B cell (primary cell): ENCODE measurements at regions of chr2 and their contacts with region 1.

Region 1: DNA sequence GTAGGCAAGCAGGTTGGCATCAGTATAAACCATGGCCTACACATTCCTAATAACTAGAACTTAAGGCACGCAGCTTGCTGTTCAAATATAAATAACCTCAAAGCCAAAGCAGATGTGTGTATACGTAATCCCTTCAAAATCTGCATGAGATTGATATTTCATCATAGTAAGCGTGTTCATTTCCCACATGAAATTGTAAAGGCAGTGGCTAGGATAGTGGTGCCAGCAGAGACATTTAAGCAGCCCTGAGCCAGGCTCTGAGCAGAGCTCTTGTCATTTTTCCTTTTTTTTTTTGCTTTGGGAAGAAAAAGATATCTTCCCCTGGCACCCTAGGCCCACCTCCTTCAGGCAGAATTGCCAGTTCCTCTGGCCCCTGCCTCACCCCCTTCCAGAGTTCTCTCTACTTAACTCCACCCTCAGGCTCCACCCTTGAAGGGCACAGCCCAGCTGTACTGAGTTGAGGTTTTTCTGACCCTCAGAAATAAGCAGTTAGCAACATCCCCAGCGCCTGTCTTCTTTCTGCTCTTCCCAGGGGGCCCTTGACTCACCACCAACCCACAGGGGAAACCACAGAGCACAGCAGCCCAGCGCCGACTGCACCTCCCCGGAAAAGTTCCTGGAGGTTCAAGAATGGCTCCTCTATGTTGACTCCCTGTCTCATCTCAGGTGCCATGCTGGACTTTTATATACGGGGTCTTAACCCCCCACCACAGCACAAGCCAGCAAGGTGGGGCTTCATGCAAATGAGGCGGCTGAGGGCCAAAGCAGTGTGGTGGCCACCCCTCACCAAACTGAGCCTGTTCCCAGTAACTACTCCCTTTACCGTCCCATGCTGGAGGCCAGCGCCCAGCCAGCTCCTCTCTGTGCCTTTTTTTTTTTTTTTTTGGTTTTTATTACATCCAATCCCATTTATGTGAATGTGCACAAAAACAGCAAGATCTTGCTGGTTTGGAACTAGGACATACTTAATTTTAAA is 84.7 kb downstream of the EHD3 start:
- DNase-seq: peak; percentile 47
- ATAC-seq: peak; percentile 92
- H3K4me3 ChIP-seq: peak overlapping the region in 1 of 5 experiments; percentile 31
- H3K4me3 Mint-ChIP-seq: peak overlapping the region; percentile 67
- H3K27ac ChIP-seq: peak overlapping the region; percentile 11 to 65
- H3K27ac Mint-ChIP-seq: peak overlapping the region; percentile 89
- H3K4me1 ChIP-seq: peaks cover 31% of the 10 kb centered on the region in 2 donors
- H3K4me1 Mint-ChIP-seq: peaks cover 51% of the 10 kb centered on the region
- H3K27me3 ChIP-seq: no peaks in the 10 kb centered on the region
- H3K27me3 Mint-ChIP-seq: no peaks in the 10 kb centered on the region
- CTCF ChIP-seq: no peak

Region 2: DNA sequence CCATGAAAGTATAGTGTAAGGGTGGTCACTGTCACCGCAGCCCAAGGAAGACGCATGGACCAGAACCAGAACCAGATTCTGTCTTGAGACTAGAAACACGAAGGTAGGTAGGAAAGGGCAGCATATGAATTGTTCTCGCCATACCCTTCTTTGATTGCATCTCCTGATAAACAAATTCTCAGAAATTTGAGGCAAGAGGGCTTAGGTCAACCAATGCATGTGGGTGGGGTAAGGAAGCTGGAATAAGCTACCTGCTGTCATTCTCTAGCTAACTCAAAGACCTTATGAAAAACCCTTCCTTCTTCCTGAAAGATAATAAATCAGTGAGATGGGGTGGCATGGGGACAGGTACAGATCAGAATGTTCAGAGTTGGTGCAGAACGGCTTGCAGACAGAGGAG is 504.4 kb before region 1 on chr2:
- CTCF ChIA-PET with region 1: no interaction called
- POLR2A ChIA-PET with region 1: no interaction called
- intact Hi-C with region 1: no loop called
- DNase-seq: no peak
- ATAC-seq: no peak
- H3K4me3 ChIP-seq: no peak overlapping the region
- H3K4me3 Mint-ChIP-seq: no peak overlapping the region
- H3K27ac ChIP-seq: no peak overlapping the region
- H3K27ac Mint-ChIP-seq: no peak overlapping the region
- H3K4me1 ChIP-seq: no peaks in the 10 kb centered on the region
- H3K4me1 Mint-ChIP-seq: no peaks in the 10 kb centered on the region
- H3K27me3 ChIP-seq: peaks cover 0 to 7% (median 5%) of the 10 kb centered on the region in 4 experiments
- H3K27me3 Mint-ChIP-seq: peaks cover 34% of the 10 kb centered on the region
- CTCF ChIP-seq: no peak

Region 3: GRCh38 chr2:31138037-31138962 is 180.3 kb before region 1 on chr2 and contains the start of gene GALNT14:
- CTCF ChIA-PET with region 1: interaction called, 3 read pairs
- POLR2A ChIA-PET with region 1: no interaction called
- intact Hi-C with region 1: loop called (anchors 5 kb)
- DNase-seq: peak; percentile 77
- ATAC-seq: peak; percentile 78
- H3K4me3 ChIP-seq: peak within 1 kb of the TSS; percentile 56 to 81 (median 60)
- H3K4me3 Mint-ChIP-seq: peak within 1 kb of the TSS; percentile 90
- H3K27ac ChIP-seq: no peak within 1 kb of the TSS
- H3K27ac Mint-ChIP-seq: peak within 1 kb of the TSS; percentile 26
- H3K4me1 ChIP-seq: peaks cover 15 to 16% of the 10 kb centered on the region in 2 donors
- H3K4me1 Mint-ChIP-seq: peaks cover 17% of the 10 kb centered on the region
- H3K27me3 ChIP-seq: peaks cover 0 to 11% (median 7%) of the 10 kb centered on the region in 4 experiments
- H3K27me3 Mint-ChIP-seq: peaks cover 21% of the 10 kb centered on the region
- CTCF ChIP-seq: peak; percentile 60
- total RNA-seq, gene GALNT14: 4.9 and 6.2 TPM in 2 replicates